SK-N-SH (cell line): ENCODE measurements at regions of chr19 and their contacts with region 1.

Region 1: GRCh38 chr19:11798391-11799330 is at the start of gene ZNF491:
- DNase-seq: peak; percentile 98
- H3K4me3 ChIP-seq: peak within 1 kb of the TSS; percentile 73 to 76
- H3K27ac ChIP-seq: peak within 1 kb of the TSS; percentile 44 to 81; a peak in 3 of 4 replicates
- H3K4me1 ChIP-seq: peaks cover 0 to 7% of the 10 kb centered on the region in 2 experiments; a peak in 2 of 4 replicates
- H3K27me3 ChIP-seq: no peaks in the 10 kb centered on the region
- CTCF ChIP-seq: peak; percentile 41; the same call in 1 of the 2 replicates
- EP300 ChIP-seq: no peak
- RAD21 ChIP-seq: no peak; the same call in 1 of the 2 replicates
- polyA plus RNA-seq, gene ZNF491: 0.77 and 1.6 TPM in 2 replicates

Region 2: DNA sequence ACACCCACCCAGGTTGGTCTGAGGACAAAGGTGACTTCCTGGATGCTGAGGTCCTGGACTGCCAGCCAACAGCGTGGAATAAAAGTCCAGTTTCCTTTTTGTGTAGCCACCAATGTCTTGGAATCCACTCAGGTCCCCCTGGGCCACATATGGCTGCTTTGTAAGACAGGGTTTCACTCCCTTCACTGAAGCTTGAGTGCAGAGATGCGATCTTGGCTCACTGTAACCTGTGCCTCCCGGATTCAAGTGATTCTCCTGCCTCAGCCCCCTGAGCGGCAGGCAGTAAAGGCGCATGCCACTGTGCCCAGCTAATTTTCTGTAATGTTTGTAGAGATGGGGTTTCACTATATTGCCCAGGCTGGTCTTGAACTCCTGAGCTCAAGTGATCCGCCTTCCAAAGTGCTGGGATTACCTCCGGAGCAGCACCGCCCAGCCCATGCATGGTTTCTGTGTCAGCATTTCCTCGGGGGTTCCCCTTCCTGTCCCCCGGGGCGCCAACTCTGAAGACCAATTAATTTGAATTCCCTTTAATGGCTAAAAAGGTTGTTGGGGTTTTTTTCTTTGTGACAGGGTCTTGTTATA is 618.9 kb before region 1 on chr19:
- CTCF ChIA-PET with region 1: no interaction called
- POLR2A ChIA-PET with region 1: no interaction called
- DNase-seq: no peak
- H3K4me3 ChIP-seq: no peak overlapping the region
- H3K27ac ChIP-seq: no peak overlapping the region
- H3K4me1 ChIP-seq: no peaks in the 10 kb centered on the region
- H3K27me3 ChIP-seq: no peaks in the 10 kb centered on the region
- CTCF ChIP-seq: no peak
- EP300 ChIP-seq: no peak
- RAD21 ChIP-seq: no peak

Region 3: GRCh38 chr19:11699931-11700794 is 98.5 kb before region 1 on chr19:
- CTCF ChIA-PET with region 1: interaction called, 12 read pairs
- POLR2A ChIA-PET with region 1: no interaction called
- DNase-seq: peak; percentile 59
- H3K4me3 ChIP-seq: no peak overlapping the region; a peak in 1 of 4 replicates
- H3K27ac ChIP-seq: no peak overlapping the region
- H3K4me1 ChIP-seq: peaks cover 0 to under 1% of the 10 kb centered on the region in 2 experiments; a peak in 2 of 4 replicates
- H3K27me3 ChIP-seq: no peaks in the 10 kb centered on the region
- CTCF ChIP-seq: peak; percentile 79
- EP300 ChIP-seq: no peak
- RAD21 ChIP-seq: peak; percentile 62

Region 4: GRCh38 chr19:11787536-11787935 is 11.1 kb before region 1 on chr19:
- CTCF ChIA-PET with region 1: interaction called, 20 read pairs
- POLR2A ChIA-PET with region 1: no interaction called
- DNase-seq: no peak
- H3K4me3 ChIP-seq: no peak overlapping the region
- H3K27ac ChIP-seq: no peak overlapping the region
- H3K4me1 ChIP-seq: no peaks in the 10 kb centered on the region
- H3K27me3 ChIP-seq: no peaks in the 10 kb centered on the region
- CTCF ChIP-seq: no peak
- EP300 ChIP-seq: no peak
- RAD21 ChIP-seq: no peak

Region 5: GRCh38 chr19:11881151-11881800 is 82.6 kb after region 1 on chr19:
- CTCF ChIA-PET with region 1: interaction called, 19 read pairs
- POLR2A ChIA-PET with region 1: no interaction called
- DNase-seq: peak; percentile 70
- H3K4me3 ChIP-seq: no peak overlapping the region
- H3K27ac ChIP-seq: no peak overlapping the region
- H3K4me1 ChIP-seq: no peaks in the 10 kb centered on the region
- H3K27me3 ChIP-seq: no peaks in the 10 kb centered on the region
- CTCF ChIP-seq: peak; percentile 59
- EP300 ChIP-seq: no peak
- RAD21 ChIP-seq: peak; percentile 83

Region 6: GRCh38 chr19:11924886-11925650 is 126.4 kb after region 1 on chr19 and contains the start of gene ZNF700:
- CTCF ChIA-PET with region 1: interaction called, 50 read pairs
- POLR2A ChIA-PET with region 1: interaction called, 6 read pairs
- DNase-seq: peak; percentile 94
- H3K4me3 ChIP-seq: peak within 1 kb of the TSS; percentile 72 to 95
- H3K27ac ChIP-seq: peak within 1 kb of the TSS; percentile 47 to 85; a peak in 3 of 4 replicates
- H3K4me1 ChIP-seq: peaks cover 0 to 2% of the 10 kb centered on the region in 2 experiments; a peak in 1 of 4 replicates
- H3K27me3 ChIP-seq: no peaks in the 10 kb centered on the region
- CTCF ChIP-seq: no peak
- EP300 ChIP-seq: no peak
- RAD21 ChIP-seq: no peak
- polyA plus RNA-seq, gene ZNF700: 3.5 and 4.4 TPM in 2 replicates

Region 7: DNA sequence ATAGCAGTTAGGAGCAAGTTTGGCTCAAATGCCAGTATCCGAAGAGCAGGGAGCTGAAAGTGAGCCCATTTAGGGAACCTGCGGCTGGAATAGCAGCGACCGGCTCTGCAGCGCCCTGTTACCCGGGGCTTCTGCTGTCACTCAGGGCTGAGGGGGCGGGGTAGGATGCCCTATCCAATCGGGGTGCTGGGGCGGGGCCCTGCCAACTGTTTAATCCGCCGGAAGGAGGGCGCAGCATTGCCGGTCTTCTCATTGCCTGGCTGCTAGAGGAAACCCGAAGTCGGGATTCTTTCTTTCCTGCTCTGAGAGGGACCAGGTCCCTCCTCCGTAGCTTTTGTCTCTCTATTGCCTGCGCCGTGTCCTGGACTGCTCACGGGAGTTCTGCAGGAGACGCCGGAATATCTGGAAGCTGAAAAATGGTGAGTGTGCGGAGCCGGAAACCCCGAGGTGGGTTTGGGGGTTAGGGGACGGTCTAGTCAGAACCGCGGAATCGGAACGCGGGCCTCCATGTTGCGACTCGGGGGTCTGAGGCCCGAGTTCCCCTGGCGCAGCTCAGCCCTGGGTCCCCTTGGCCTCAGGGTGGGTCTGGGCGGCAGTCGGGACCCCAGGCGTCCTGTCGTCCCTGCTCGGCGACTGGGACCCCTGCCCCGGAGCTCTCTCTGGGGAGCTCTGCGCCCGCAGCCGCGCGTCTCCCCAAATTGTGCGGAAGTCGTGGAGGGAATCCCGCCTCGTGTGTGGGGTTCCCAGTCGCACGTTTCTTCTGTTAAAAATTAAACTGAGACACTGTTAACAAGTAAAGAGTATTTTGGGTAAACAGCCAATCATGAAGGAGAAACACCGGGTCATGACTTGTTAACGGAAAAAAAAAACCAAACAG is 189.0 kb after region 1 on chr19:
- CTCF ChIA-PET with region 1: interaction called, 94 read pairs
- POLR2A ChIA-PET with region 1: interaction called, 6 read pairs
- DNase-seq: peak; percentile 94
- H3K4me3 ChIP-seq: peak overlapping the region; percentile 88 to 93
- H3K27ac ChIP-seq: peak overlapping the region; percentile 67 to 86
- H3K4me1 ChIP-seq: no peaks in the 10 kb centered on the region; a peak in 1 of 4 replicates
- H3K27me3 ChIP-seq: no peaks in the 10 kb centered on the region
- CTCF ChIP-seq: no peak
- EP300 ChIP-seq: no peak
- RAD21 ChIP-seq: no peak